ENCODE measurements at regions of chr14 and their contacts with region 1.

Region 1: GRCh38 chr14:73785873-73786695 is 65.5 kb upstream of the PTGR2 start:
- DNase-seq: peak; percentile 34 to 76 (median 59)
- ATAC-seq: peak; percentile 59 to 65 (median 62)
- H3K4me3 ChIP-seq: peak overlapping the region; percentile 81 to 85
- H3K4me3 Mint-ChIP-seq: peak overlapping the region; percentile 95
- H3K27ac ChIP-seq: peak overlapping the region; percentile 73
- H3K27ac Mint-ChIP-seq: peak overlapping the region; percentile 96
- H3K4me1 ChIP-seq: peaks cover 36 to 57% of the 10 kb centered on the region in 2 experiments
- H3K4me1 Mint-ChIP-seq: peaks cover 65 to 70% (median 68%) of the 10 kb centered on the region in 3 donors
- H3K27me3 ChIP-seq: no peaks in the 10 kb centered on the region
- H3K27me3 Mint-ChIP-seq: no peaks in the 10 kb centered on the region

Region 2: DNA sequence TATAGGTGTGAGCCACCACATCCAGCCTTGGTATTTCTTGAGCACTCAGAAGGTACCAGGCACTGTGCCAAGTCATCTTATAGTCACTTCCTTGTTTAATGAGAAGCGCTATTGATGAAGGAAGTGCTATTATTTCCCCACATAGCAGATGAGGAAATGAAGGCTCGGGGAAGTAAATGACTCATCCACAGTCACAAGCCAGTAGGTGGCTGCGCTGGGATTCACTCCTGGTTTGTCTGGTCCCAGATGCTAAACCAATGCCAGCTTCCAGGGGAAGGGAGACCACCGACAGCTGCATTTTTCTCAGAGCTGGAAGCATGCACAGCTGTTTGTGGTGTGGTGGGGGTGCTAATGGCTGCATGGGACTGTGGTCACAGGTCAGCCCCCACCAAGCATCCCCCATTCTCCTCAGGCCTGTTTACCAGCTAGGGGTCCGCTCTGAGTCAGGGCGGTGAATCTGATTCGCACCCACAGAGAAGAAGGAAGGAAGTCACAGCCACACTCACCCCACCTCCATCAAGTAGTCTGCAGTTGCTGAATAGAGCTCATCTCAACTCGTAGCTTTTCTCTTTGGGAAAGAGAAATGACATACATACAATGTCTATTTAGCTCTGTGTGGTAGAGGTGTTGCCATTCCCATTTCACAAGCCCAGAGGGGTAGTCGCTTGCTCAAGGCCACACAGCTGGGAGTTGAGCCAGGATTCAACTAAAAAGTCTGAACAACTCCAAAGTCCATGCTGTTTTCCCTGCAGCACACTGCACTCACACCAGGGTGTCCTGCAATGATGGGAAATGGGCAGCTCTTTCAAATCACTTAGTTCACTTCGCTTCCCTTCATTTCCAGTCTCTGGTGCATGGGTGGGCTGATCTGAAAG is 832.2 kb after region 1 on chr14:
- CTCF ChIA-PET with region 1: no interaction called
- POLR2A ChIA-PET with region 1: interaction called in 1 of 2 experiments, 10 read pairs
- DNase-seq: peak; percentile 38 to 90 (median 65)
- ATAC-seq: peak; percentile 87 to 92 (median 90)
- H3K4me3 ChIP-seq: peak overlapping the region; percentile 20 to 37
- H3K4me3 Mint-ChIP-seq: peak overlapping the region; percentile 63 to 84 (median 73)
- H3K27ac ChIP-seq: peak overlapping the region; percentile 88
- H3K27ac Mint-ChIP-seq: peak overlapping the region; percentile 92 to 94
- H3K4me1 ChIP-seq: peaks cover 12 to 78% of the 10 kb centered on the region in 2 experiments
- H3K4me1 Mint-ChIP-seq: peaks cover 59 to 73% (median 63%) of the 10 kb centered on the region in 3 donors
- H3K27me3 ChIP-seq: peaks cover 0 to 13% of the 10 kb centered on the region in 2 experiments
- H3K27me3 Mint-ChIP-seq: peaks cover 0 to 4% of the 10 kb centered on the region in 2 donors

Measured in T-cell (primary cell).